ENCODE measurements at regions of chr7 and their contacts with region 1.

Region 1: GRCh38 chr7:158903897-158904541 is 47.7 kb downstream of the DYNC2I1 start:
- DNase-seq: no peak
- ATAC-seq: no peak
- H3K4me3 ChIP-seq: no peak overlapping the region
- H3K27ac ChIP-seq: no peak overlapping the region
- H3K4me1 ChIP-seq: no peaks in the 10 kb centered on the region
- H3K27me3 ChIP-seq: no peaks in the 10 kb centered on the region
- CTCF ChIP-seq: no peak

Region 2: GRCh38 chr7:158760936-158761335 is 143.1 kb before region 1 on chr7:
- CTCF ChIA-PET with region 1: no interaction called
- POLR2A ChIA-PET with region 1: no interaction called
- in situ Hi-C with region 1: no loop called
- intact Hi-C with region 1: no loop called
- DNase-seq: no peak
- ATAC-seq: no peak
- H3K4me3 ChIP-seq: no peak overlapping the region
- H3K27ac ChIP-seq: no peak overlapping the region
- H3K4me1 ChIP-seq: no peaks in the 10 kb centered on the region
- H3K27me3 ChIP-seq: no peaks in the 10 kb centered on the region
- CTCF ChIP-seq: no peak; the same call in 1 of the 2 replicates

Region 3: DNA sequence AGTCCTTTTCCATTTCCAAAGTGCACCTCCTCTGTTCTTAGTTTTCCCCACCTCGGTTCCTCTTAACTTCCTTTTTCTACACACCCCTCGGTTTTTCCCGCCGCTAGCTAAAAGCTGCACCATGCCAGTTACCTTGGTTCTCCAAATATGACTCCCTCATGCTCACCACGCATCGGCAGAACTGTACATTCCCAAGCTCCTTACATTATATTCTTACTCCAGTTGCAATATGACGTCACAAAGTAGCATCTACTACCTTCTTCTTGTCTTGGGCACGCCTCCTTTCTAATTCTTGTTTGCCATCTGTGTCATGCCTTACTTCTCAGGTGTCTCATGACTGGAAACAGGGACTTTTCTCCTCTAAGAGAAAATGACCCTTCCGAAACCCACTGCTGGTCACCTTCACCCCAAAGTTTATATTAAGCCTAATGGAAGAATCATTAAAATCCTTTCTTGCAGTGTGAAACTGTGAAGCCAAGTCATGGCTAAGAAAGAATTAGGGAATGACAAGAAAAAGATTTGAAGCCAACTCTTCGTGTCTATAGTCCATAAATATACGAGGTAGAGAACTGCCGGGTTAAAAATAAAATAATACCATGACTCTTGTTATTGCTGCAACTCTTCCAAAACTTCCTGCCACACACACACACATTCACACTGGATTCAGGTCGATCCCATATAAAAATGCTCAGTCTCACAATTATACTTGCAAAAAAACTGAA is 76.4 kb before region 1 on chr7:
- CTCF ChIA-PET with region 1: no interaction called
- POLR2A ChIA-PET with region 1: interaction called, 11 read pairs
- in situ Hi-C with region 1: no loop called
- intact Hi-C with region 1: no loop called
- DNase-seq: no peak
- ATAC-seq: no peak
- H3K4me3 ChIP-seq: peak overlapping the region; percentile 87 to 88
- H3K27ac ChIP-seq: peak overlapping the region; percentile 82
- H3K4me1 ChIP-seq: peaks cover 34% of the 10 kb centered on the region
- H3K27me3 ChIP-seq: no peaks in the 10 kb centered on the region
- CTCF ChIP-seq: no peak

Region 4: GRCh38 chr7:158832994-158833393 is 71.0 kb before region 1 on chr7:
- CTCF ChIA-PET with region 1: no interaction called
- POLR2A ChIA-PET with region 1: interaction called, 10 read pairs
- in situ Hi-C with region 1: no loop called
- intact Hi-C with region 1: no loop called
- DNase-seq: no peak
- ATAC-seq: no peak
- H3K4me3 ChIP-seq: no peak overlapping the region
- H3K27ac ChIP-seq: no peak overlapping the region
- H3K4me1 ChIP-seq: peaks cover 6% of the 10 kb centered on the region
- H3K27me3 ChIP-seq: no peaks in the 10 kb centered on the region
- CTCF ChIP-seq: no peak

Region 5: GRCh38 chr7:159000859-159001435 is 96.9 kb after region 1 on chr7:
- CTCF ChIA-PET with region 1: no interaction called
- POLR2A ChIA-PET with region 1: interaction called, 10 read pairs
- in situ Hi-C with region 1: no loop called
- intact Hi-C with region 1: no loop called
- DNase-seq: no peak
- ATAC-seq: no peak
- H3K4me3 ChIP-seq: no peak overlapping the region
- H3K27ac ChIP-seq: no peak overlapping the region
- H3K4me1 ChIP-seq: no peaks in the 10 kb centered on the region
- H3K27me3 ChIP-seq: no peaks in the 10 kb centered on the region
- CTCF ChIP-seq: no peak; the same call in 1 of the 2 replicates

Measured in Panc1 (cell line).